H1 (cell line): ENCODE measurements at regions of chr15 and their contacts with region 1.

Region 1: GRCh38 chr15:43204016-43204901 is 16.6 kb downstream of the EPB42 start:
- DNase-seq: peak; percentile 44 to 67
- H3K4me3 ChIP-seq: no peak overlapping the region
- H3K27ac ChIP-seq: no peak overlapping the region
- H3K4me1 ChIP-seq: peaks cover 0 to 3% (median 0%) of the 10 kb centered on the region in 4 experiments; a peak in 1 of 7 replicates
- H3K27me3 ChIP-seq: no peaks in the 10 kb centered on the region
- CTCF ChIP-seq: peak; percentile 75 to 84 (median 77)
- EP300 ChIP-seq: no peak
- POLR2A ChIP-seq: no peak
- RAD21 ChIP-seq: peak; percentile 40 to 62; a peak in 3 of 4 replicates

Region 2: DNA sequence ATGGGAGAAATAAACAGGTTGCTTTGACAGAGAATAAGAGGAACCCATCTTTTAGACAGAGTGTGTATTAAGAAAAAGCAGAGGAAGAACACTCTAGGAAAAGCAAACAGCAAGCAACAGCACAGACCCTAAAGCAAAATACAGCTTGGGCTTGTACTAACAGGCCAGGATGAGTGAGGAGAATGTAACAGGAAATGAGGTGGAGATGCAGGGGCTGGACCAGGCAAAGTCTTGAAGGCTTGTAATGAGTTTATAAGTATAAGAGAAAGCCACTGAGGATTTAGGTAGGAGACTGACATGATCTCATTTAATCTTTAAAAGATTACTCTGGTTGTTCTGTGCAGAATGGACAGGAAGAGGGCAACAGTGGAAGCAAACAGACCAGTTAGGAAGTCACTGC is 103.3 kb before region 1 on chr15:
- CTCF ChIA-PET with region 1: no interaction called
- POLR2A ChIA-PET with region 1: no interaction called
- DNase-seq: no peak
- H3K4me3 ChIP-seq: no peak overlapping the region; a peak in 1 of 8 replicates
- H3K27ac ChIP-seq: no peak overlapping the region
- H3K4me1 ChIP-seq: no peaks in the 10 kb centered on the region
- H3K27me3 ChIP-seq: no peaks in the 10 kb centered on the region
- CTCF ChIP-seq: no peak
- EP300 ChIP-seq: no peak
- POLR2A ChIP-seq: no peak
- RAD21 ChIP-seq: no peak

Region 3: DNA sequence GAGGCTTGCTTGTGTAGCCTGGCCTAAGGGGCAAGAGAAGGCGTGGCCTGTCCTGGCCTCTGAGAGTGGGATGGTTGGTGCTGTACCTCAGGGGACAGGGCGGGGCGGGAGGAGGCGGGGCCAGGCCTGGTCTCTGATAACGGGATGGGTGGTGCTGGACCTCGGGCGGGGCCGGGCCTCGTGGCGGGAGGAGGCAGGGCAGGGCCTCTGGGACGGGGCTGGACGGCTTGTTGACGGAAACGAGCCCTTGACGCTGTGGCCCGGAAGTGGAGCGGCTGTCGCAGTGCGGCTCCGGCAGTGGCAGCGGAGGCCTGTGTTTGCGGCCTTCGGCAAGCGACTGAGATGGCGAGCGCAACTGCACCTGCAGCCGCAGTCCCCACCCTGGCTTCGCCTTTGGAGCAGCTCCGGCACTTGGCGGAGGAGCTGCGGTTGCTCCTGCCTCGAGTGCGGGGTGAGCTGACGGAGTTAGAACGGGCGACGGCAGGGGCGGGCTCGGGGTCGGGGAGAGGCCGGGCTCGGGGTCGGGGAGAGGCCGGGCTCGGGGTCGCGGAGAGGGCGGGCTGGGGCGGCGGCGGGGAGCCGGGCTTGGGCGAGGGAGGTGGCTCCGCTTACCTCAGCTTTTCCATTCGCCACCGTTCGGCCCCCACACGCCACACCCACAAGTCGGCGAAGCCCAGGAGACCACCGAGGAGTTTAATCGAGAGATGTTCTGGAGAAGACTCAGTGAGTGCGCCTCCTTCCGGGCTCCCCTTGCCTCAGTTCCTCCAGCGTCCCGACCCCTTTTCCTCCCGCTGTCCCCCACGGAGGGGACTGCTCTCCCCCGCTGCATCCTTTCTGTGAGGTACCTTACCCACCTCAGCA is 18.9 kb before region 1 on chr15 and contains the start of gene CCNDBP1:
- CTCF ChIA-PET with region 1: interaction called, 58 read pairs
- POLR2A ChIA-PET with region 1: no interaction called
- DNase-seq: peak; percentile 87 to 95
- H3K4me3 ChIP-seq: peak within 1 kb of the TSS; percentile 64 to 93 (median 89)
- H3K27ac ChIP-seq: 0 out of 2 replicates have a peak within 1 kb of the TSS, but pooled peaks have one; percentile 54
- H3K4me1 ChIP-seq: peaks cover 4 to 8% (median 5%) of the 10 kb centered on the region in 4 experiments; a peak in 5 of 7 replicates
- H3K27me3 ChIP-seq: no peaks in the 10 kb centered on the region
- CTCF ChIP-seq: peak; percentile 28 to 59 (median 56); a peak in 3 of 4 replicates
- EP300 ChIP-seq: no peak
- POLR2A ChIP-seq: peak in 1 of 2 experiments; percentile 56; a peak in 1 of 3 replicates
- RAD21 ChIP-seq: peak; percentile 15 to 16; a peak in 1 of 4 replicates
- total RNA-seq, gene CCNDBP1: 23.4 TPM in 2 replicates

Region 4: DNA sequence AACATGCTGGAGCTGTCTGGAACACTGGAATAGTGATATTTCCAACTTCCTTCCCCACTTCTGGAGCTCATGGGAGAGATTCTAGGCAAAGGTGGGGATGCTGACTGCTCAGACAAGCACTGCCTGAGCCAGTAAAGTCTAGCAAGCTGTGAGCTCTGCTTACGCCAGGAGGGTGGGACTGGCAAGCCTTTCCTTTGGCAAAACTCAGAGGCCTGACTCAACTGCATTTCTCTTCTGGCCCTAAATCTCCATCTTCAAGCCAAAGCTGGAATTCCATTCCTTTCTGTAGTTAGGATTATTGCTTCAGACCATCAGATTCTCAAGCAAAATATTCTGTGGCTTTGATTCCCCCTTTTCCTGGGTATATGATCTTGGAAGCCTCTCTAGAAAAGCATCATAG is 36.8 kb after region 1 on chr15:
- CTCF ChIA-PET with region 1: interaction called, 13 read pairs
- POLR2A ChIA-PET with region 1: no interaction called
- DNase-seq: no peak
- H3K4me3 ChIP-seq: no peak overlapping the region
- H3K27ac ChIP-seq: no peak overlapping the region
- H3K4me1 ChIP-seq: no peaks in the 10 kb centered on the region
- H3K27me3 ChIP-seq: no peaks in the 10 kb centered on the region
- CTCF ChIP-seq: no peak
- EP300 ChIP-seq: no peak
- POLR2A ChIP-seq: no peak
- RAD21 ChIP-seq: no peak